Activated naive CD4-positive, alpha-beta T cell treated with anti-CD3 and anti-CD28 coated beads for 36 hours (primary cell): ENCODE measurements at regions of chr2 and their contacts with region 1.

Region 1: DNA sequence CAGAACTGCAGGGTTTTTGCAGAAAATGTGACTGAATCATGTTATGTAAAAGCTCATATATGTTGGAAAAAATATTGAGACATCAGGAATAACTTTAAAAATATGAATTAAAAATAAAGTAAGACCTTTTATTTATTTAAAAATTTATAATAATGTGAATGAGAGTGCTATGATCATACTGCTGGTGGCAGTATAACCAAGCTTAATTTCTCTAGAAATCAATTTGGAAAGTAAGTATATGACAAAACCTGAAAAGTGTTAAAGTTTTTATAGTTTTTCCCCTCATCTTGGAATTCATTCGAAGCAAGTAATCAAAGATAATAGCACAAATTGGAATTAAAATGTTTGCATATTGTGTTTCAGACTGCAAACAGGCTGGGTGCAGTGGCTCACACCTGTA is 7.5 kb downstream of the SLC39A10 start:
- DNase-seq: no peak
- H3K4me3 Mint-ChIP-seq: no peak overlapping the region
- H3K27ac Mint-ChIP-seq: peak overlapping the region; percentile 41
- H3K4me1 Mint-ChIP-seq: peaks cover 56% of the 10 kb centered on the region
- H3K27me3 Mint-ChIP-seq: no peaks in the 10 kb centered on the region

Region 2: DNA sequence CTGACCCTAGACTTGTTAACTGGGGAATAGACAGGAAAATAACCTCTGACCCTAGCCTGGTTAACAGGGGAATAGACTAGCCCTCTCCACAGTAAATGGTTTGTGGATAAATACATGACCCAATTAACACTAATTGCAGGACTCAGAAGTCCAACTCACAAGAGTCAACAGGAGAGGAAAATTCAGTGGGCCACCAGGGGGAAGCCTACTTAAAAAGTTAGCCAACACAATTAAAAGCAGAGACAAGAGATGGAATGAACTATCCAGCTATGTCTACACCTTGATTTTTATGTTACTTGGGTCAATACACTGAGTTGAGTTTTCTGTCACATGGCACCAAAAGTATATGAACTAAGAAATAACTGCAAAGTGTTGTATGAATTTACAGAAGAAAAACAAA is 166.4 kb before region 1 on chr2:
- CTCF ChIA-PET with region 1: interaction called, 19 read pairs
- intact Hi-C with region 1: loop called (anchors 1 kb)
- DNase-seq: peak; percentile 76
- H3K4me3 Mint-ChIP-seq: no peak overlapping the region
- H3K27ac Mint-ChIP-seq: no peak overlapping the region
- H3K4me1 Mint-ChIP-seq: peaks cover 44% of the 10 kb centered on the region
- H3K27me3 Mint-ChIP-seq: no peaks in the 10 kb centered on the region

Region 3: GRCh38 chr2:195937176-195937575 is 272.6 kb after region 1 on chr2:
- CTCF ChIA-PET with region 1: interaction called, 4 read pairs
- intact Hi-C with region 1: loop called (anchors 1 kb)
- DNase-seq: no peak
- H3K4me3 Mint-ChIP-seq: no peak overlapping the region
- H3K27ac Mint-ChIP-seq: no peak overlapping the region
- H3K4me1 Mint-ChIP-seq: no peaks in the 10 kb centered on the region
- H3K27me3 Mint-ChIP-seq: no peaks in the 10 kb centered on the region